HepG2 (cell line): ENCODE measurements at regions of chr9 and their contacts with region 1.

Region 1: DNA sequence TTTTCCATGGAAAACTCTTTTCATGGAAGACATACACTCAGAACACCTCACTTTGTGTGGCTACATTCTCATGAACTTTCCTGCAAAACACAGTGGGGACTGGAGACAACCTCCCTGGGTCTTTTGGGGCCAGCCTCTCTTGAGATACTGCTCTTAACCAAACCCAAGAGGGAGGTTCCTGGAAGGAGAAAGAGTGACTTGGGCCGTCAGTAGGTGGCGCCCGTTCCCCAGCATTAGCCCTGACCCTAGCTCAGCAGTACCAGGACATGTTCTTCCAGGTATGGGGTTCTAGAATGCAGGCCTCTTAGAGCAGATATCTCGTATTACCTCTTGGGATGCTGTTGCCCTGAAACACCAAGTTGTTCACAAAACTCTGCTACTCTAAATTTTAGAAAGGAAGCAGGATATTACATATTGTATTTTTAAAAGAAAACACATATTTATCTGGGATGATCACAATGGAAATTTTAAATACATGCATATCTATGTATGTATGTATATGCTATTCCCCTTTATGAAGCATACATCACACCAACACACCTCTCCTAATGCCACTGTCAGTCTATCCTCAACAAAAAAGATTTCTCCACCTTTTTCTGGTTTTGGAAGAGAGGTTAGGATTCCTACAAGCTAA is 15.8 kb upstream of the GLIS3 start:
- DNase-seq: peak; percentile 43
- ATAC-seq: peak; percentile 98
- H3K4me3 ChIP-seq: no peak overlapping the region
- H3K27ac ChIP-seq: no peak overlapping the region
- H3K4me1 ChIP-seq: no peaks in the 10 kb centered on the region
- H3K27me3 ChIP-seq: no peaks in the 10 kb centered on the region
- CTCF ChIP-seq: peak; percentile 89
- EP300 ChIP-seq: no peak
- POLR2A ChIP-seq: no peak
- RAD21 ChIP-seq: peak; percentile 70

Region 2: DNA sequence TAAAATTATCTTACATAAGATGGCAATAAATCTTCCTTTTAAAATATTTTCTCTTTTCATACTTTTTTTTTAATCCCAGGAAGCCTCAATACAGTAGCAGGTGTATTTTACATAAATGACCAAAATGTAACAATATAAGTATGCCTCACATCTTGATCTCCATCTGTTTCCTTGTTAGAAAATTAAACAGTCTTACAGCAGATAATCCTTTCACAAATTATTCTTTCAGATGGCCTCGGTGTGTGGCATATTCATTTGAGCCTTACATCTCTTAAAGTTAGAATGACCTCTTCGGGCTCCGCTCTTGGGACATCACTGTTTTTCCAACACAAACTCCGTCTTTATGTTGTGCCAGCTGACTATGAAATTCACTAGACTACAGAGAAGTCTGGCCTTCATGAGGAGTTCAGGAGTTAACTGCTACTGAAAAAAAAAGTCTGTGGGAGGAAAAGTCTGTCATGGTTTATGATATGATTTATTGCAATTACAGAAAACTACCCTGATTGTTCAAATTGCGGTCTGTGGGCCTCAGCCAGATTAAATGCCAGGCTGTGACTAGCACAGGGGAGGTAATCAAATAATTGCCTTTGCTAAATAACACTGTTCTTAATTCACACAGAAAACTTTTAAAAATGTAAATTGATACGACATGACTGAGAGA is 1178.9 kb before region 1 on chr9:
- CTCF ChIA-PET with region 1: no interaction called
- POLR2A ChIA-PET with region 1: no interaction called
- in situ Hi-C with region 1: no loop called
- intact Hi-C with region 1: no loop called
- DNase-seq: no peak
- ATAC-seq: no peak
- H3K4me3 ChIP-seq: no peak overlapping the region
- H3K27ac ChIP-seq: no peak overlapping the region
- H3K4me1 ChIP-seq: 0 out of 2 replicates have a peak, but pooled peaks cover 14% of the 10 kb centered on the region
- H3K27me3 ChIP-seq: no peaks in the 10 kb centered on the region
- CTCF ChIP-seq: no peak
- EP300 ChIP-seq: no peak
- POLR2A ChIP-seq: no peak
- RAD21 ChIP-seq: no peak

Region 3: GRCh38 chr9:4277531-4277991 is 38.1 kb before region 1 on chr9:
- CTCF ChIA-PET with region 1: no interaction called
- POLR2A ChIA-PET with region 1: no interaction called
- in situ Hi-C with region 1: no loop called
- intact Hi-C with region 1: no loop called
- DNase-seq: no peak
- ATAC-seq: no peak
- H3K4me3 ChIP-seq: no peak overlapping the region
- H3K27ac ChIP-seq: no peak overlapping the region
- H3K4me1 ChIP-seq: no peaks in the 10 kb centered on the region
- H3K27me3 ChIP-seq: no peaks in the 10 kb centered on the region
- CTCF ChIP-seq: no peak
- EP300 ChIP-seq: no peak
- POLR2A ChIP-seq: no peak
- RAD21 ChIP-seq: no peak

Region 4: DNA sequence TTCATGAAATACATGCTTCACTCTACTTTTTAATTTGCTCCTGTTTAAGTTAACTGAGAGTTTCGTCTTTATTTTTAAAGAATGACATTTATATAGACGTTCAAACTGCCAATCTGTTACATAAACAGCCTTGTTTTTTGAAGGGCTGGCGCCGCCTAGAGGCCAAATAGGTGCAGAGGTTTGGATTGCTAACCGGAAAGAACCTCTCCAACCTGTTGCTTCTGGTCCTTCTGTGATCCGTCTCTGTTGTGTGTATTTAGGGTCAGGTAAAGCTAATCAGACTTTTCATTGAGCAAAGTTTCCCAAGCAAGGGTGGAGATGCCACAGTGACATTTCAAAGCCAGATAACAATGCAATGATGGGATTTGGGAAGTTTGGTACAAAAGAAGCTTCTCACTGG is 23.7 kb after region 1 on chr9:
- CTCF ChIA-PET with region 1: interaction called, 4 read pairs
- POLR2A ChIA-PET with region 1: no interaction called
- in situ Hi-C with region 1: no loop called
- intact Hi-C with region 1: loop called (anchors 1 kb)
- DNase-seq: peak; percentile 66
- ATAC-seq: peak; percentile 78
- H3K4me3 ChIP-seq: no peak overlapping the region
- H3K27ac ChIP-seq: no peak overlapping the region
- H3K4me1 ChIP-seq: 0 out of 2 replicates have a peak, but pooled peaks cover 5% of the 10 kb centered on the region
- H3K27me3 ChIP-seq: no peaks in the 10 kb centered on the region
- CTCF ChIP-seq: peak; percentile 79
- EP300 ChIP-seq: no peak
- POLR2A ChIP-seq: no peak
- RAD21 ChIP-seq: no peak

Region 5: GRCh38 chr9:4366591-4367330 is 51.1 kb after region 1 on chr9:
- CTCF ChIA-PET with region 1: interaction called, 16 read pairs
- POLR2A ChIA-PET with region 1: no interaction called
- in situ Hi-C with region 1: no loop called
- intact Hi-C with region 1: loop called (anchors 1 kb)
- DNase-seq: peak; percentile 10
- ATAC-seq: peak; percentile 52; the same call in 2 of the 3 replicates
- H3K4me3 ChIP-seq: no peak overlapping the region
- H3K27ac ChIP-seq: no peak overlapping the region
- H3K4me1 ChIP-seq: no peaks in the 10 kb centered on the region
- H3K27me3 ChIP-seq: no peaks in the 10 kb centered on the region
- CTCF ChIP-seq: peak; percentile 71
- EP300 ChIP-seq: 0 out of 4 replicates have a peak, but pooled peaks of 1 of the 2 experiments have one; percentile 14
- POLR2A ChIP-seq: no peak
- RAD21 ChIP-seq: peak; percentile 51; the same call in 1 of the 2 replicates

Region 6: GRCh38 chr9:4555251-4555650 is 239.6 kb after region 1 on chr9:
- CTCF ChIA-PET with region 1: interaction called, 4 read pairs
- POLR2A ChIA-PET with region 1: no interaction called
- in situ Hi-C with region 1: loop called (anchors 10 kb)
- intact Hi-C with region 1: loop called (anchors 5 kb)
- DNase-seq: no peak
- ATAC-seq: no peak
- H3K4me3 ChIP-seq: no peak overlapping the region
- H3K27ac ChIP-seq: no peak overlapping the region
- H3K4me1 ChIP-seq: no peaks in the 10 kb centered on the region
- H3K27me3 ChIP-seq: no peaks in the 10 kb centered on the region; a peak in 1 of 5 replicates
- CTCF ChIP-seq: no peak
- EP300 ChIP-seq: no peak
- POLR2A ChIP-seq: no peak
- RAD21 ChIP-seq: no peak

Region 7: GRCh38 chr9:4640027-4640426 is 324.3 kb after region 1 on chr9:
- CTCF ChIA-PET with region 1: no interaction called
- POLR2A ChIA-PET with region 1: no interaction called
- in situ Hi-C with region 1: no loop called
- intact Hi-C with region 1: loop called (anchors 10 kb)
- DNase-seq: peak; percentile 15
- ATAC-seq: peak; percentile 43; the same call in 2 of the 3 replicates
- H3K4me3 ChIP-seq: no peak overlapping the region
- H3K27ac ChIP-seq: no peak overlapping the region
- H3K4me1 ChIP-seq: no peaks in the 10 kb centered on the region
- H3K27me3 ChIP-seq: no peaks in the 10 kb centered on the region
- CTCF ChIP-seq: peak; percentile 66
- EP300 ChIP-seq: no peak
- POLR2A ChIP-seq: no peak
- RAD21 ChIP-seq: no peak